K562 (cell line): ENCODE measurements at regions of chr12 and their contacts with region 1.

Region 1: GRCh38 chr12:751192-751998 is 984 bp upstream of the WNK1 start:
- DNase-seq: peak; percentile 67 to 96 (median 74)
- ATAC-seq: peak; percentile 70
- H3K4me3 ChIP-seq: peak overlapping the region; percentile 61
- H3K27ac ChIP-seq: peak overlapping the region; percentile 84
- H3K4me1 ChIP-seq: peaks cover 8 to 20% of the 10 kb centered on the region in 2 experiments; a peak in 4 of 5 replicates
- H3K27me3 ChIP-seq: no peaks in the 10 kb centered on the region
- CTCF ChIP-seq: peak; percentile 72 to 80 (median 74)
- EP300 ChIP-seq: peak; percentile 50
- POLR2A ChIP-seq: peak; percentile 78; the same call in 1 of the 2 replicates
- RAD21 ChIP-seq: peak; percentile 69 to 78

Region 2: GRCh38 chr12:642633-643474 is 108.5 kb before region 1 on chr12:
- CTCF ChIA-PET with region 1: no interaction called
- POLR2A ChIA-PET with region 1: interaction called, 4 read pairs
- in situ Hi-C with region 1: no loop called
- intact Hi-C with region 1: loop called (anchors 1 kb)
- DNase-seq: peak; percentile 79 to 92 (median 88)
- ATAC-seq: peak; percentile 74
- H3K4me3 ChIP-seq: peak overlapping the region; percentile 51
- H3K27ac ChIP-seq: peak overlapping the region; percentile 91
- H3K4me1 ChIP-seq: peaks cover 36 to 45% of the 10 kb centered on the region in 2 experiments
- H3K27me3 ChIP-seq: no peaks in the 10 kb centered on the region
- CTCF ChIP-seq: peak; percentile 37 to 80 (median 43); a peak in 4 of 6 replicates
- EP300 ChIP-seq: no peak
- POLR2A ChIP-seq: peak; percentile 63
- RAD21 ChIP-seq: peak in 1 of 2 experiments; percentile 25; a peak in 3 of 4 replicates

Region 3: DNA sequence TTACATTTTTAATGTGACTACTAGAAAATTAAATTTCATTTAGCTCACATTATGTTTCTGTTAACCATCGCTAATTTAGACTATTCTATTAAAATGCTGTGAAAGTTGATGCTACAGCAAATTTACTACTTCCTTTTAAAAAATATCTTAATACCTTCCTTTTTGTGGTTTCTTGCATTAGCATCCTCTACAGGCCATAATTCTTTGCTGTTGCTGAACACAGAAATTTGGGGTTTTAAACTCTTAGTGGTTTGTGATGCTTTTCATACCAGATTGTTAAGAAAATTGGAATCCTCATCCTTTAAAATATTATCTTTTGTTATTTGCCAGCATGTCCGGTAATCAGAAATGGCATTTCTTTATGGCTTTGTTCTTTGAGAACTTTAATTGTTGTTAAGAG is 19.1 kb after region 1 on chr12:
- CTCF ChIA-PET with region 1: no interaction called
- POLR2A ChIA-PET with region 1: interaction called, 10 read pairs
- in situ Hi-C with region 1: no loop called
- intact Hi-C with region 1: no loop called
- DNase-seq: no peak
- ATAC-seq: no peak
- H3K4me3 ChIP-seq: no peak overlapping the region
- H3K27ac ChIP-seq: no peak overlapping the region
- H3K4me1 ChIP-seq: no peaks in the 10 kb centered on the region
- H3K27me3 ChIP-seq: no peaks in the 10 kb centered on the region
- CTCF ChIP-seq: no peak
- EP300 ChIP-seq: no peak
- POLR2A ChIP-seq: no peak
- RAD21 ChIP-seq: no peak

Region 4: DNA sequence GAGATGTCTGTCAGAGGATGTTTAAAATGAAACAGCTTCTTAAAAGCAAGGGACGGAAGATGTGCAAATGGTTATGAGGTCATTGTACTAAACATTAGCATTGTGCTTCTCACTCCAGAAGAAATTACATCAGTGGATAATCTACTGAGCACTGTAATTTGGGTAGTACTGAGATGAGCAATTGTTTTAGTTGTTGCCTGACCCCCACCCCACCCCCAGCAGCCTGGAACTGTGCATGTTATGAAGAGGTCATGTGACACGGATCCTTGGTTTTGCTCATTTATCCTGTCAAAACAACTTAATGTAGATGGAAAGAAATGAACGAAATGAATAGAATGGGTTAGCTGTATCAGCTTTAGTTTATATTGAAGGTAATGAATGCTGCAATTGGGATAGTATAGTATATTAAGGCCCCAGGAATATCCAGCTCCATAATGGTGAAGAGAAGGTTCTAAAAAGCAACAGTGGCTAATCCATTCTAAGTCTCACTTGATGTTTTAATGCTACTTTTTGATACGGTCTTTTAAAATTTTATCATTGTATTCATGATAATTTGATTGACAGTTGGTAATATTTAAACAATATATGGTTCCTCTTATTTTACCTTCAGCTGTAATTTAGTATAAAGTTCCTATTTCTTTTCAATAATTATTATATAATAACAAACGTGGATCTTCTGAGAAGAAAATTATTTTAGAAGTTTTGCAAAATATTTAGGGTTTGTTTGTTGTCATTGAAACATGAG is 59.4 kb after region 1 on chr12:
- CTCF ChIA-PET with region 1: no interaction called
- POLR2A ChIA-PET with region 1: interaction called, 3 read pairs
- in situ Hi-C with region 1: no loop called
- intact Hi-C with region 1: loop called (anchors 5 kb)
- DNase-seq: peak in 1 of 4 experiments; percentile 7
- ATAC-seq: peak; percentile 70
- H3K4me3 ChIP-seq: no peak overlapping the region
- H3K27ac ChIP-seq: no peak overlapping the region
- H3K4me1 ChIP-seq: peaks cover 2 to 3% of the 10 kb centered on the region in 2 experiments; a peak in 3 of 5 replicates
- H3K27me3 ChIP-seq: no peaks in the 10 kb centered on the region
- CTCF ChIP-seq: no peak
- EP300 ChIP-seq: no peak
- POLR2A ChIP-seq: no peak
- RAD21 ChIP-seq: no peak

Region 5: DNA sequence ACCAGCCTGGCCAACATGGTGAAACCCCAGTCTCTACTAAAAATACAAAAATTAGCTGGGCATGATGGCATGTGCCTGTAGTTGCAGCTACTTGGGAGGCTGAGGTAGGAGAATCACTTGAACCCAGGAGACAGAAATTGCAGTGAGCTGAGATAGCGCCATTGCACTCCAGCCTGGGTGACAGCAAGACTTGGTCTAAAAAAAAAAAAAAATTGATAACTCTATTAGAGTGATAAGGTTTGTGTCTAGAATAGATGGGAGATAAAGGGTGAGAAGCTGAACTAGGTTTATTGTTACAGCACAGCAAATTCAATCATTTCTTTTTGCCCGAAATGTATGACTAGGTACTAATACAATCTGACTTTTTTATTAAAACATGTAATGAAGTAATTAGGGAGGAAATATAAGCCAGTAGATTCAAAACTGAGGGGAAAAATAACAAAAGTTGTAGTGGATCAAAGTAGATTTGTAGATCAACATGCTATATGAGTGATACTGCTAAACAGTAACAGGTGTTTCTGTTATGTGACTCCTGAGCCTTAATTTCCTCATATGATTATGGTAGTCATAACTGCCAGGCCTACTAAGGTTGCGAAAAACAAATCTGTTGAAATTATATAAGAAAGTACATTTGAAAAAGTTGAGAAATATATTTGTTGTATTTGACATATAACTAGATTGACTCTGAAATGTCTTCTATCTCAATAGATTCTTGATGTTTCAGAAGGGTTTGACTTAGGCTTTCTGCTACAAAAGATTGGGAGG is 84.5 kb after region 1 on chr12:
- CTCF ChIA-PET with region 1: no interaction called
- POLR2A ChIA-PET with region 1: no interaction called
- in situ Hi-C with region 1: no loop called
- intact Hi-C with region 1: no loop called
- DNase-seq: no peak
- ATAC-seq: no peak
- H3K4me3 ChIP-seq: no peak overlapping the region
- H3K27ac ChIP-seq: no peak overlapping the region
- H3K4me1 ChIP-seq: no peaks in the 10 kb centered on the region
- H3K27me3 ChIP-seq: no peaks in the 10 kb centered on the region
- CTCF ChIP-seq: no peak
- EP300 ChIP-seq: no peak
- POLR2A ChIP-seq: no peak
- RAD21 ChIP-seq: no peak

Region 6: DNA sequence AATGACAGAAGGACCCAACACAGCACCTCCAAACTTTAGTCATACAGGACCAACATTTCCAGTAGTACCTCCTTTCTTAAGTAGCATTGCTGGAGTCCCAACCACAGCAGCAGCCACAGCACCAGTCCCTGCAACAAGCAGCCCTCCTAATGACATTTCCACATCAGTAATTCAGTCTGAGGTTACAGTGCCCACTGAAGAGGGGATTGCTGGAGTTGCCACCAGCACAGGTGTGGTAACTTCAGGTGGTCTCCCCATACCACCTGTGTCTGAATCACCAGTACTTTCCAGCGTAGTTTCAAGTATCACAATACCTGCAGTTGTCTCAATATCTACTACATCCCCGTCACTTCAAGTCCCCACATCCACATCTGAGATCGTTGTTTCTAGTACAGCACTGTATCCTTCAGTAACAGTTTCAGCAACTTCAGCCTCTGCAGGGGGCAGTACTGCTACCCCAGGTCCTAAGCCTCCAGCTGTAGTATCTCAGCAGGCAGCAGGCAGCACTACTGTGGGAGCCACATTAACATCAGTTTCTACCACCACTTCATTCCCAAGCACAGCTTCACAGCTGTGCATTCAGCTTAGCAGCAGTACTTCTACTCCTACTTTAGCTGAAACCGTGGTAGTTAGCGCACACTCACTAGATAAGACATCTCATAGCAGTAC is 133.5 kb after region 1 on chr12:
- CTCF ChIA-PET with region 1: no interaction called
- POLR2A ChIA-PET with region 1: no interaction called
- in situ Hi-C with region 1: no loop called
- intact Hi-C with region 1: no loop called
- DNase-seq: no peak
- ATAC-seq: no peak
- H3K4me3 ChIP-seq: no peak overlapping the region
- H3K27ac ChIP-seq: no peak overlapping the region
- H3K4me1 ChIP-seq: no peaks in the 10 kb centered on the region
- H3K27me3 ChIP-seq: no peaks in the 10 kb centered on the region
- CTCF ChIP-seq: 0 out of 6 replicates have a peak, but pooled peaks of 1 of the 3 experiments have one; percentile 6
- EP300 ChIP-seq: no peak
- POLR2A ChIP-seq: no peak
- RAD21 ChIP-seq: no peak